GM12878 (cell line): ENCODE measurements at regions of chr5 and their contacts with region 1.

Region 1: GRCh38 chr5:141691867-141692532 is 10.0 kb upstream of the ARAP3 start:
- DNase-seq: no peak
- ATAC-seq: peak; percentile 97
- H3K4me3 ChIP-seq: no peak overlapping the region
- H3K27ac ChIP-seq: no peak overlapping the region
- H3K4me1 ChIP-seq: peaks cover 6% of the 10 kb centered on the region
- H3K27me3 ChIP-seq: peaks cover 0 to 5% of the 10 kb centered on the region in 2 experiments; a peak in 3 of 4 replicates
- CTCF ChIP-seq: peak; percentile 96 to 98 (median 97)
- EP300 ChIP-seq: no peak
- POLR2A ChIP-seq: no peak
- RAD21 ChIP-seq: peak; percentile 86

Region 2: DNA sequence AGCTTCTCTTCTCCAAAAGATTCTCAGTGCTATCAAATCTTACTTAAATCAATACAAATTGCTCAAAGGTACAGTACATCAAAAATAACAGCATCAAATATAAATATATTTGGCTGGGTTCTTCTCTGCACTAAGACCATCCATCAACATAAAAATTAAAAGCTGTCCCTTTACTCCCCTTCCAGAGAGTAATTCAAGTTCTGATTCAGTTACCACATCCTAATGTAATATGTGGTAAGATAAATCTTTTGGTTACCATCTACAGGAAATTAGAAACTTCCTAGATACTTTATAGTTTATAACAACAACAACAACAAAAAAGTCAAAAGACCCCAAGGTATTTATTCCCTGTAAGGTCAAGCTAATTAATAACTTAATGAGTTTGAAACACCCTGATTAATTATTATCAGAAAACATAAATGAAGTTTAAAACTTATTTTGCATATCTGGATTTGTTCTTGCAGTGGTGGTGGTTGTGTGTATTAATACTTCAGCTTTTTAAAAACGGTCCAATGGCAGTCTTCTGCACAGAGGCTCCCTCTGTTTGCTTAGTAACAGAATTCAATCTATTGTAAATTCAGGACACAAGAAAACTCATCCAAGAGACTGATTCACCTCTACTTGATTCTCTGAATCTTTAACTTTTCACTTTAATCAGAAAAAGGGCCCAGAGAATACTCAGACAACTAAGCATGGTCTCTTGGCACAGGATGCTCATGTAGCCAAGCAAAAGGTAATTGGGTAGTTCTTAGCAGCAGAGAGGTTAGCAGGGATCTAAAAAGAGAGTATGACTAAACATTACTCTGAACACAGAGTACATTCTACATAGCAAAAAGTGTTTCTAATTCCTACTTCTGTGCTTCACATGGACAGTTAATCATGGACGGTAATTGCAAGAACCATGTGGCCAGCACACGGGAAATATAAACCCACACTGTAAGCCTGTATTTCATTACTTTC is 93.3 kb before region 1 on chr5:
- CTCF ChIA-PET with region 1: interaction called, 25 read pairs
- POLR2A ChIA-PET with region 1: no interaction called
- RAD21 ChIA-PET with region 1: no interaction called
- SMC1A ChIA-PET with region 1: interaction called, 3 read pairs
- in situ Hi-C with region 1: no loop called
- intact Hi-C with region 1: no loop called
- DNase-seq: no peak
- ATAC-seq: peak; percentile 68
- H3K4me3 ChIP-seq: no peak overlapping the region
- H3K27ac ChIP-seq: no peak overlapping the region; the same call in 1 of the 2 replicates
- H3K4me1 ChIP-seq: peaks cover 11% of the 10 kb centered on the region
- H3K27me3 ChIP-seq: no peaks in the 10 kb centered on the region
- CTCF ChIP-seq: no peak
- EP300 ChIP-seq: no peak
- POLR2A ChIP-seq: no peak
- RAD21 ChIP-seq: no peak

Region 3: GRCh38 chr5:141811287-141812155 is 119.5 kb after region 1 on chr5:
- CTCF ChIA-PET with region 1: interaction called, 26 read pairs
- POLR2A ChIA-PET with region 1: no interaction called
- RAD21 ChIA-PET with region 1: interaction called, 7 read pairs
- SMC1A ChIA-PET with region 1: interaction called, 3 read pairs
- in situ Hi-C with region 1: no loop called
- intact Hi-C with region 1: loop called (anchors 2 kb)
- DNase-seq: no peak
- ATAC-seq: peak; percentile 89
- H3K4me3 ChIP-seq: no peak overlapping the region
- H3K27ac ChIP-seq: no peak overlapping the region
- H3K4me1 ChIP-seq: no peaks in the 10 kb centered on the region
- H3K27me3 ChIP-seq: peaks cover 3 to 4% of the 10 kb centered on the region in 2 experiments; a peak in 2 of 4 replicates
- CTCF ChIP-seq: peak; percentile 41 to 69 (median 69)
- EP300 ChIP-seq: no peak
- POLR2A ChIP-seq: no peak
- RAD21 ChIP-seq: peak; percentile 31

Region 4: GRCh38 chr5:141878711-141879425 is 186.9 kb after region 1 on chr5:
- CTCF ChIA-PET with region 1: interaction called, 97 read pairs
- POLR2A ChIA-PET with region 1: no interaction called
- RAD21 ChIA-PET with region 1: interaction called, 67 read pairs
- SMC1A ChIA-PET with region 1: interaction called, 39 read pairs
- in situ Hi-C with region 1: loop called (anchors 5 kb)
- intact Hi-C with region 1: loop called (anchors 1 kb)
- DNase-seq: peak; percentile 71
- ATAC-seq: peak; percentile 89
- H3K4me3 ChIP-seq: peak overlapping the region; percentile 28; the same call in 1 of the 2 replicates
- H3K27ac ChIP-seq: no peak overlapping the region
- H3K4me1 ChIP-seq: peaks cover 37% of the 10 kb centered on the region
- H3K27me3 ChIP-seq: peaks cover 22 to 32% of the 10 kb centered on the region in 2 experiments
- CTCF ChIP-seq: peak; percentile 97 to 98 (median 97); a peak in 5 of 6 replicates
- EP300 ChIP-seq: no peak
- POLR2A ChIP-seq: no peak
- RAD21 ChIP-seq: peak; percentile 89

Region 5: DNA sequence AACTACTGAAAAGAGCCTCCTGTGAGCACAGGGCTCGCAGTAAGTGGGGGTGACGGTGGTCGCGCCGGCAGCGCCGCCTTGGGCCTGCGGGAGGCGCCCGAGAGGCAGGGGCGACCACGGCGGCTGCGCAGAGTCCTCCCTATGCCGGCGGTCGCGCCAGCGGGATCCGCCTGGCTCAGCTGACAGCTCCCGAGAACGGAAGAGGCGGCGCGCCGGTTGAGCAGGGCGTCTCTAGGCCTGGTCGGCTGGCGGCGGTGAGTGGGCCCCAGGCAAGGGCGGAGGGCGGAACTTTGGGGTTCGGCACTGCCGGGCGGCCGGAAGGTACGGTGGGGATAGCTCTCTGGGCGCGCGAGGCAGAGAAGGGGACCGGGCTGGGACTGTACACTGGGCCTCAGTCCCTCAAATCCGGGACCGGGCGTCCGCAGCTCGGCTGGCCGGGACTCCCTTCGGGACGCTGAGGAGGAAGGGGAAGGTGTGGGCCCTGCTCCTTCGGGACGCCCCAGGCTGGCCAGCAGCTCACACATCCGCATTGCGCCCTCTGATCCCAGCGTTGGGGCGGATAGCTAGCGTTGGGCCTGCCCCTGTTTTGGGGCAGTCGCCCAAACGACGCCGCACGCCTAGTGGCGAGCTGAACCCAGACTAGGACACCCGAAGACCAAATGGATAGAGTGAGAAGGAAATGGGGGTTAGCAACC is 277.1 kb after region 1 on chr5 and contains the start of gene RNF14:
- CTCF ChIA-PET with region 1: interaction called, 24 read pairs
- POLR2A ChIA-PET with region 1: no interaction called
- RAD21 ChIA-PET with region 1: interaction called, 5 read pairs
- SMC1A ChIA-PET with region 1: interaction called, 19 read pairs
- in situ Hi-C with region 1: no loop called
- intact Hi-C with region 1: no loop called
- DNase-seq: peak; percentile 74
- ATAC-seq: peak; percentile 95
- H3K4me3 ChIP-seq: peak within 1 kb of the TSS; percentile 73
- H3K27ac ChIP-seq: peak within 1 kb of the TSS; percentile 96
- H3K4me1 ChIP-seq: peaks cover 8% of the 10 kb centered on the region
- H3K27me3 ChIP-seq: no peaks in the 10 kb centered on the region
- CTCF ChIP-seq: peak; percentile 84 to 98 (median 95)
- EP300 ChIP-seq: no peak
- POLR2A ChIP-seq: peak; percentile 97
- RAD21 ChIP-seq: no peak
- polyA plus RNA-seq, gene RNF14: 28.1 to 34.4 TPM

Region 6: GRCh38 chr5:142145106-142145900 is 453.3 kb after region 1 on chr5:
- CTCF ChIA-PET with region 1: interaction called, 24 read pairs
- POLR2A ChIA-PET with region 1: no interaction called
- RAD21 ChIA-PET with region 1: interaction called, 14 read pairs
- SMC1A ChIA-PET with region 1: interaction called, 8 read pairs
- in situ Hi-C with region 1: loop called (anchors 10 kb)
- intact Hi-C with region 1: loop called (anchors 1 kb)
- DNase-seq: peak; percentile 11
- ATAC-seq: peak; percentile 96
- H3K4me3 ChIP-seq: no peak overlapping the region
- H3K27ac ChIP-seq: no peak overlapping the region
- H3K4me1 ChIP-seq: no peaks in the 10 kb centered on the region
- H3K27me3 ChIP-seq: no peaks in the 10 kb centered on the region
- CTCF ChIP-seq: peak; percentile 66 to 79 (median 70)
- EP300 ChIP-seq: no peak
- POLR2A ChIP-seq: no peak
- RAD21 ChIP-seq: peak; percentile 54